ENCODE measurements at regions of chr17 and their contacts with region 1.

Region 1: GRCh38 chr17:9971991-9972599 is 67.0 kb upstream of the RCVRN start:
- DNase-seq: peak in 1 of 2 donors; percentile 43
- ATAC-seq: no peak
- H3K4me3 ChIP-seq: no peak overlapping the region
- H3K27ac ChIP-seq: peak overlapping the region in 2 of 4 donors; percentile 4 to 33
- H3K4me1 ChIP-seq: peaks cover 0 to 3% of the 10 kb centered on the region in 2 donors
- H3K27me3 ChIP-seq: peaks cover 0 to 4% (median 0%) of the 10 kb centered on the region in 3 donors
- CTCF ChIP-seq: no peak
- POLR2A ChIP-seq: no peak

Region 2: GRCh38 chr17:10127819-10128425 is 155.8 kb after region 1 on chr17:
- in situ Hi-C with region 1: loop called in 1 of 4 experiments (anchors 25 kb)
- intact Hi-C with region 1: loop called (anchors 10 kb)
- DNase-seq: peak; percentile 73 to 77
- ATAC-seq: peak; percentile 65 to 69
- H3K4me3 ChIP-seq: no peak overlapping the region
- H3K27ac ChIP-seq: peak overlapping the region; percentile 54 to 68 (median 65)
- H3K4me1 ChIP-seq: peaks cover 0 to 2% of the 10 kb centered on the region in 2 donors
- H3K27me3 ChIP-seq: no peaks in the 10 kb centered on the region
- CTCF ChIP-seq: no peak
- POLR2A ChIP-seq: no peak

Region 3: GRCh38 chr17:10226930-10227685 is 255.0 kb after region 1 on chr17:
- in situ Hi-C with region 1: no loop called
- intact Hi-C with region 1: loop called (anchors 5 kb)
- DNase-seq: peak in 1 of 2 donors; percentile 16
- ATAC-seq: no peak
- H3K4me3 ChIP-seq: no peak overlapping the region
- H3K27ac ChIP-seq: no peak overlapping the region
- H3K4me1 ChIP-seq: no peaks in the 10 kb centered on the region
- H3K27me3 ChIP-seq: no peaks in the 10 kb centered on the region
- CTCF ChIP-seq: peak in 4 of 5 experiments; percentile 38 to 51 (median 49)
- POLR2A ChIP-seq: no peak